ENCODE measurements at regions of chrX and their contacts with region 1.

Region 1: DNA sequence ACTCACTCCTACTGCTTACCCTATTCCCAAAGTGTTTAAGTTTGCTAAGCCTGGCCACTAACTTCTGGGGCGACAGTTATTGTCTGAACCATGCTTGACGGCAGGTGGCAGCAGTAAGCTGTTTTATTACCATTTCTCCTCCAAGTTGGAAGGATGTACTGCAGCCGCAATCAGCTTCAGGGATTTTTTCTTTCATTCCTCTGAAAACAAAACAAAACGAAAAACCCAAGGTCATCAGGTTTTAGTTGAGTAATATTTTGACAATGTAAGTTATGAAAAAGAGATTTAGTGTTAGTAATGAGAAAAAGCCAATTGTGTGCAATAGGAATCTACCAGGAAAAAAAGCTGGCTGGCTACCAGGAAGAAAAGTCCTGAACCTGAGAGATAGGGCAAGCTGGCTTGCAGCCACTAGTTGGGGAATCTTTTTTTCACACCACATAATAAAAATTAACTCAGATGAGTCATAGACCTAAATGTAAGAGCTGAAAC is 13.2 kb upstream of the RAB9B start:
- DNase-seq: peak; percentile 78
- H3K4me3 ChIP-seq: no peak overlapping the region
- H3K27ac ChIP-seq: no peak overlapping the region
- H3K4me1 ChIP-seq: peaks cover 2% of the 10 kb centered on the region
- H3K27me3 ChIP-seq: peaks cover 0 to 5% of the 10 kb centered on the region in 2 experiments
- CTCF ChIP-seq: peak; percentile 47 to 49
- POLR2A ChIP-seq: no peak

Region 2: DNA sequence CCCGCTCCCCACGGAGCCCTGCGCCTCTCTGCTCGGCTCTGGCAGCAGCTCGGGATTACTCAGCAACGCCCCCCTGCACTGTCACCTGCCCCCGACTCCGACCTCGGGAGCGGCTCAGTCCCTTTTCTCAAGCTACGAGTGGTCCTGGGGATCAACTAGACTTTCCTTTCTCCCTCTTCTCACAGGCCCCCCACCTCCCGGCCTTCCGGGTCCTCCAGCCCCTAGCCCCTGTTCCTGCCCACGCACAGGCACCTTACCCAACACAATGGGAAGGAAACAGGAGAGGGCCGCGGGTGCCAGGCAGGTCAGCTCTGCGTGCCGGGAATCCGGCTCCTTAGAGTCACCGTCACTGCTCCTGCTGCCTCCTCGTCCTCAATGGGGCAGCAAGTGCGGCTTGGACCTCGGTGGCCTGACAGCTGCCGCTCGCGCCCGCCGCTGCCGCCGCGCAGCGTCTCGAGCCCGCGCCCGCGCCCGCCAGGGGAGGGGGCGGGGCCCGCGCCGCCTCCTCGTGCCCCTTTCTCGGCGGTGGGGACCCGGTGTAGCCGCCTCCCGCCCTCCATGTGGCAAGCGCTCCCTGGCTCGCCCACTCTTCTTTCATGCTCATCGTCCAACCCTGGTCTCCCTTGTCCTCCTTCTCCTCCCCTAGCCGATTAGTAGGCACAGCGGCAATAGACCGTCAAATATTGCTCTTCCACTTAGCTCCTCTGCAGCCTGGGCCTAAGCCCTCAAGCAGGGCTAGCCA is 13.2 kb before region 1 on chrX and contains the start of gene RAB9B:
- CTCF ChIA-PET with region 1: interaction called, 10 read pairs
- POLR2A ChIA-PET with region 1: no interaction called
- dilution Hi-C with region 1: no loop called
- intact Hi-C with region 1: no loop called
- DNase-seq: peak; percentile 41
- H3K4me3 ChIP-seq: peak within 1 kb of the TSS in 2 of 3 experiments; percentile 42 to 46
- H3K27ac ChIP-seq: no peak within 1 kb of the TSS
- H3K4me1 ChIP-seq: no peaks in the 10 kb centered on the region
- H3K27me3 ChIP-seq: no peaks in the 10 kb centered on the region
- CTCF ChIP-seq: no peak
- POLR2A ChIP-seq: no peak
- total RNA-seq, gene RAB9B: 0.23 and 0.55 TPM in 2 replicates

Region 3: DNA sequence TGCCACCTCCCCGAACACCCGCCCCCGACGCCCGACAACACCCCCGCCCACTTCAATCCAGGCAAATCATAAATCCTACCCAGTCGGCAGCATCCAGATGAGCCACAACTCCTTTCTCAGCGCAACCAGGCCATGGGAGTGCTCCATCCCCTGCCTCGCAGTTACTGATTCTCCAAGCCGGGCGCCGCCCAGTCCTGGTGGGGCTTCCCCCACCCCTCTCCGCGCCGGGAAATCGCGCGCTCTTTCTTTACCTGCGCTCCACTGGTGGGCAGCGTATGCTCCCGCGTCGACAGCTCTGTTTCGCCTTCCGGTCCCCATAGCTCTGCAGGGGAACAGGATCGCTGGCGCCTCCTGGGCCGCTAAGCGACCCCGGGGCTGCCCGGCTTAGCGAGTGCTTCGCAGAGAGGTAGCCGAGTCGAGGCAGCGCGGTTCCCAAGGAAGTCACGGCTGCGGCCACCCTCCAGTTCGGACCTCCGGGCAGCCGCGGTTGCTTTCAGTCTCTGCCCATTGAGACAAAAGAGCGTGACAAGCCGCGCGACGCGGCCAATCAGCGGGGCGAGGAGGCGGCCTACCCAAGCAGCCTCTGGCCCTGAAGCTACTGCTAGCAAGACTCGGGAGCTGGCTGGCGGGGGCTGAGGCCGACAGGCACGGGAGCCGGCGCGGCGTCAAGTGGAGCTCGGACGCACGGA is 73.5 kb after region 1 on chrX:
- CTCF ChIA-PET with region 1: interaction called, 10 read pairs
- POLR2A ChIA-PET with region 1: no interaction called
- dilution Hi-C with region 1: no loop called
- intact Hi-C with region 1: no loop called
- DNase-seq: peak; percentile 76
- H3K4me3 ChIP-seq: peak overlapping the region; percentile 21 to 64 (median 40)
- H3K27ac ChIP-seq: peak overlapping the region; percentile 13
- H3K4me1 ChIP-seq: no peaks in the 10 kb centered on the region
- H3K27me3 ChIP-seq: no peaks in the 10 kb centered on the region
- CTCF ChIP-seq: no peak
- POLR2A ChIP-seq: no peak

Region 4: DNA sequence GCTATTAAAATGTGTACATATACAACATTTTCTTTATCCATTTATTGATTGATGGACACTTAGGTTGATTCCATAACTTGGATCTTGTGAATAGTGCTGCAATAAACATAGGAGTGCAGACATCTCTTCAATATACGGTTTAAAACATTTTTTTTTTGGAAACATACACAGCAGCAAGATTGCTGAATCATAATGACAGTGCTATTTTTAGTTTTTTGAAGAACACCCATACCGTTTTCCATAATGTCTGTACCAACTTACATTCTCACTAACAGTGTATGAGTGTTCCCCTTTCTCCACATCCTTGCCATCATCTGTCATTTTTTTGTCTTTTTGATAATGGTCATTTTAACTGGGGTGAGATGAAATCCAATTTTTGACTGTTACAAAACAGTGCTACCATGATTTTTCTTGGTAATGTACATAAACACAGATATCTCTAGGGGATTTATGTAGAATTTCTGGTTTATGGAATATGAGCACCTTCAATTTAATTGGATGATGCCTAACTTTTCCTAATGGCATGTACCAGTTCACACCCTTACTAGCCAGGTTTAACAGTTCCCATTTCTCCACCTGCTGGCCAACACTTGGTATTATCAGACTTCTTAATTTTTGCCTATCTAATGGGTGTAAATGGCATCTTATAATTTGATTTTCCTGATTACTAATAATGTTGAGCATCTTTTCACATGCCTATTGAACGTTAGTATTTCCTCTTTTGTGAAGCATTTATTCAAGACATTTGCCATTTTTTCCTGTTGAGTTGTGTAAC is 96.2 kb after region 1 on chrX:
- CTCF ChIA-PET with region 1: interaction called, 30 read pairs
- POLR2A ChIA-PET with region 1: no interaction called
- dilution Hi-C with region 1: no loop called
- intact Hi-C with region 1: loop called (anchors 1 kb)
- DNase-seq: peak; percentile 37
- H3K4me3 ChIP-seq: no peak overlapping the region
- H3K27ac ChIP-seq: no peak overlapping the region
- H3K4me1 ChIP-seq: no peaks in the 10 kb centered on the region
- H3K27me3 ChIP-seq: no peaks in the 10 kb centered on the region
- CTCF ChIP-seq: peak; percentile 10 to 32
- POLR2A ChIP-seq: no peak

Region 5: GRCh38 chrX:104113222-104113965 is 268.2 kb after region 1 on chrX:
- CTCF ChIA-PET with region 1: interaction called, 21 read pairs
- POLR2A ChIA-PET with region 1: no interaction called
- dilution Hi-C with region 1: no loop called
- intact Hi-C with region 1: loop called (anchors 1 kb)
- DNase-seq: peak; percentile 52
- H3K4me3 ChIP-seq: peak overlapping the region; percentile 67 to 76 (median 70)
- H3K27ac ChIP-seq: peak overlapping the region; percentile 72
- H3K4me1 ChIP-seq: peaks cover 12% of the 10 kb centered on the region
- H3K27me3 ChIP-seq: no peaks in the 10 kb centered on the region
- CTCF ChIP-seq: peak; percentile 39 to 40
- POLR2A ChIP-seq: no peak

Region 6: GRCh38 chrX:104136241-104137019 is 291.2 kb after region 1 on chrX:
- CTCF ChIA-PET with region 1: interaction called, 5 read pairs
- POLR2A ChIA-PET with region 1: no interaction called
- dilution Hi-C with region 1: no loop called
- intact Hi-C with region 1: loop called (anchors 2 kb)
- DNase-seq: peak; percentile 73
- H3K4me3 ChIP-seq: peak overlapping the region in 2 of 3 experiments; percentile 16 to 19
- H3K27ac ChIP-seq: no peak overlapping the region
- H3K4me1 ChIP-seq: no peaks in the 10 kb centered on the region
- H3K27me3 ChIP-seq: no peaks in the 10 kb centered on the region
- CTCF ChIP-seq: peak; percentile 54 to 55
- POLR2A ChIP-seq: no peak

Region 7: DNA sequence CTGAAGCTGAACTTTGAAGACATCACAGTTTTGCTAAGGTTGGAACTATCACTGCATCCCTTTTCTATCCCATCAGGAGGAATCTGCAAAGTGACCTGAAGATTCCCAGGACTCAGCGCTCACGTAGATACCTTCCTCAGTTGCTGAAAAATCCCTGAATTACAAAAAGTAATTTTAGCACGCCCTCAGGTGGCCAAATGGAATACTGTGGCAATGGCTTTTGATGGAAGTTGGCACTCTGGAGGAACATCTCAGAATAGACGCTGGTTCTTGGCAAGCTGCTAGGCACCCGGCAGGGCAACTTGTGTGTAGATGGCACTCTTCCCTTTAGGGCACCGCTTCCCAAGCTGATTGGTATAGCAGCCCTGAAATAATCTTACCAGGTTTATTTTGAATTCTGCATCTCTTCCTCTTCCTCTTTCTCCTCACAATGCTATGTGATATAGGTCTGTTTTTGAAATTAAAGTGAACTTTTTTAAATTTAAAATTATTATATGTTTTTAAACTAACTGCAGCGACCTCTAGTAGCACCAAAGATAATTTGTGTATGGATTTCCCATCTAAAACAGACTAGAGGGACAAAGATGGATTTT is 425.8 kb after region 1 on chrX:
- CTCF ChIA-PET with region 1: interaction called, 13 read pairs
- POLR2A ChIA-PET with region 1: no interaction called
- dilution Hi-C with region 1: no loop called
- intact Hi-C with region 1: no loop called
- DNase-seq: peak; percentile 62
- H3K4me3 ChIP-seq: peak overlapping the region in 1 of 3 experiments; percentile 40
- H3K27ac ChIP-seq: no peak overlapping the region
- H3K4me1 ChIP-seq: peaks cover 2% of the 10 kb centered on the region
- H3K27me3 ChIP-seq: peaks cover 0 to 7% of the 10 kb centered on the region in 2 experiments
- CTCF ChIP-seq: peak; percentile 49 to 55
- POLR2A ChIP-seq: no peak

Measured in endothelial cell of umbilical vein (primary cell).